Adrenal gland (tissue), 19 donors: ENCODE measurements at regions of chr9 and their contacts with region 1.

Region 1: GRCh38 chr9:101139082-101139481 is 110.6 kb downstream of the PLPPR1 start:
- DNase-seq: no peak
- H3K4me3 ChIP-seq: no peak overlapping the region
- H3K27ac ChIP-seq: no peak overlapping the region
- H3K4me1 ChIP-seq: no peaks in the 10 kb centered on the region
- H3K27me3 ChIP-seq: no peaks in the 10 kb centered on the region
- CTCF ChIP-seq: no peak
- POLR2A ChIP-seq: no peak

Region 2: DNA sequence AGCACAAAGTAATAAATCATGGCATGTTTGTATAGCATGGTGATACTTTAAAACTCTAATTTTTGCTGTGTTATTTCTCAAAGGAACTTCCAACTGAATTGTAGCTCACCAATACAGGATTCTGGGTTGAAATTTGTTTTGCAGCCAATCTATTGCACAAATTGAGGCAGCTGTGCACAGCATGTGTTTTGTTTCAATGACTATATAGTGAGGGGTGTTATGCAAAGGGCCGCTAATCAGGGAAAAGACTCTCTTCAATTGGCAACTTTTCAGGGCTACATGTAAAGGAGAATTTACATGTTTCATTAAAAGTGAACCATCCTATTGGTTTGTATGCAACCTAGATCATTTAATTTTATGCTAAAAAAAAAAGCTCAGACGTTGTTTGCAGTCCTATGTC is 66.0 kb before region 1 on chr9:
- intact Hi-C with region 1: no loop called
- DNase-seq: no peak
- H3K4me3 ChIP-seq: no peak overlapping the region
- H3K27ac ChIP-seq: no peak overlapping the region
- H3K4me1 ChIP-seq: no peaks in the 10 kb centered on the region
- H3K27me3 ChIP-seq: no peaks in the 10 kb centered on the region
- CTCF ChIP-seq: no peak
- POLR2A ChIP-seq: no peak

Region 3: DNA sequence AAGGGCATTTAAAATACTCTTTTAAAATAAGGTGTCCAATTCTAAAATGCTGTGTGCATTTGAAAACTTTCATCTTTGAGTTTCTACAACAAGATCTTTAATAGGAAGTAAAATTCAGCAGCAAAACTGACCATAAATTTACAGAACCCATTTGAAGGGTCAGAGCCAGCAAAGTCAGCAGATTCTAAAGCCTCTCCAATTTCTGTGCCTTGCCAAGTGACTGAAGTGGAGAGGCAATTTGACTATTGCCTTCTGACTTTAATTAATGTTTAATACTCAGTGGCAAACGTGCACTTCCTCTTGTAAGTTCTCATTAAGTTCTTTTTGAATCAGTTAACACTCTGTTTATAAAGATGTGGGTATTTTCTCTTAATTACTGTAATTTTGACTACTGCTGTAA is 90.5 kb after region 1 on chr9:
- intact Hi-C with region 1: loop called in 1 of 2 experiments (anchors 10 kb)
- DNase-seq: no peak
- H3K4me3 ChIP-seq: no peak overlapping the region
- H3K27ac ChIP-seq: no peak overlapping the region
- H3K4me1 ChIP-seq: no peaks in the 10 kb centered on the region
- H3K27me3 ChIP-seq: no peaks in the 10 kb centered on the region
- CTCF ChIP-seq: no peak
- POLR2A ChIP-seq: no peak